BJ (cell line): ENCODE measurements at regions of chr2 and their contacts with region 1.

Region 1: GRCh38 chr2:17646081-17646554 is 105.6 kb downstream of the VSNL1 start:
- DNase-seq: peak; percentile 57
- H3K4me3 ChIP-seq: no peak overlapping the region
- H3K27me3 ChIP-seq: no peaks in the 10 kb centered on the region
- CTCF ChIP-seq: peak; percentile 83

Region 2: DNA sequence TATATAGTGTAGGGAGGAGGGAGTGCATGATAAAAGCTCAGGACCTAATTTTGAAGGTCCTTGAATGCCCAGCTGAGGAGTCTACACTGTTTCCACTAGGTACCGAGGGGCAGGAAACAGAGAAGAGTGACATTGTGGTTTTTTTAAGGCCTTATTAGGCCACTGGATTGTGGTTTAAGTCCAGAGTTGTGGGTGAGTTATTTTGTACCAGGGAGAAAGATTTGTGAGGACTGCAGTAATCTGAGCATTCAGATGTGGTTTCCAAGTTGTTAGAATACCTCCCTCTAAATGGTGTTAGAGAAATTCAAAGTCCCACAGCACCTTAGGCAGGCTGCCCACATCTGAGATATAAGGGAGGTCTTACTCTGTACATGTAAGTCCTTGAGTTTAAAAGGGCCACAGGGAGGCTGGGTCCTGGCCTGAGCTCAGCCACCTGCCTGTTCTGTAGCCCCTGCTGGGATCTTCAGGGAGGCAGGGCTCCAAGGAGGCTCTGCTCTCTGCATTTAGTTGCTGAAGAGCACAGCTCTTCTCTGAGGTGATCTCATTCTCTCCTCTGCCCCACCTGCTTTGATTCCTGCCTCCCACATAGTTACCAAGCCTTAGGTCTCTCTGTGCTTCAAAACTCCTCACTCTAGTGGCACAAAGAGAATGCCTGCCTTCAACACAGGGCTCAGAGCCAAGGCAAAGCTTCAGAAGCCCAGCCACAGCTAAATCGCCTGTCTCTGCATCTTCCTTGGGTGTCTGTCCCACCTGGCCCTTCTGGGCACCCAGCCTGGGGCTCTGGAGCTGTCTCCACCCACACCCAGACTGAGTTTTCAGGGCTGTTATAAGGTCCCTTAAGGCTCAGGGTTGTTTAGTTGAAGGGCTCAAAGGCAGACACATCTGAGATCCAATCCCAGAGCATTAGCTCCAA is 17.5 kb before region 1 on chr2:
- CTCF ChIA-PET with region 1: interaction called, 10 read pairs
- POLR2A ChIA-PET with region 1: no interaction called
- DNase-seq: no peak
- H3K4me3 ChIP-seq: no peak overlapping the region
- H3K27me3 ChIP-seq: no peaks in the 10 kb centered on the region
- CTCF ChIP-seq: no peak

Region 3: GRCh38 chr2:17658251-17658843 is 12.2 kb after region 1 on chr2:
- CTCF ChIA-PET with region 1: interaction called, 19 read pairs
- POLR2A ChIA-PET with region 1: interaction called, 3 read pairs
- DNase-seq: peak; percentile 65
- H3K4me3 ChIP-seq: no peak overlapping the region
- H3K27me3 ChIP-seq: no peaks in the 10 kb centered on the region
- CTCF ChIP-seq: no peak

Region 4: GRCh38 chr2:17672583-17673317 is 26.6 kb after region 1 on chr2:
- CTCF ChIA-PET with region 1: interaction called, 98 read pairs
- POLR2A ChIA-PET with region 1: no interaction called
- DNase-seq: peak; percentile 22
- H3K4me3 ChIP-seq: no peak overlapping the region
- H3K27me3 ChIP-seq: no peaks in the 10 kb centered on the region
- CTCF ChIP-seq: no peak